Natural killer cell (primary cell): ENCODE measurements at regions of chr13 and their contacts with region 1.

Region 1: DNA sequence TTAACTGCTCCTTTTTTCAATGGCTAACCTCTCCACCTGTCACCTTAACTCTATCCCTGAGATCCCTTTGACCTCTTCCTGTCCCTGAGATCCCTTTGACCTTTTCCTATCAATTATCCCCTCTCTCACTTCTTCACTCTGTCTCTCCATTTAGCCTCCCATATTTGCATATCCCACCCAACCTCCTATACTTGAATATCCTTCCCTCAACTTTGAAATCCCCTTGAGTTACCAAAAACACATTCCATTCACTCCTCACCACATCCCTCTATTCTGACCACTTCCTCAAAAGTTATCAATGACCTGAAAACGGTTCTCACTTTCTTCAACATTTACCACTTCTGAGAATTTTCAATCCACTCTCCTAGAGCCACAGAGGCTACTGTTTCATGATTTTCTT is 3.0 kb downstream of the MYCBP2 start:
- DNase-seq: peak in 1 of 2 donors; percentile 20
- ATAC-seq: no peak
- H3K4me3 ChIP-seq: no peak overlapping the region
- H3K4me3 Mint-ChIP-seq: peak overlapping the region; percentile 96
- H3K27ac ChIP-seq: peak overlapping the region; percentile 5
- H3K27ac Mint-ChIP-seq: peak overlapping the region; percentile 44 to 94
- H3K4me1 ChIP-seq: peaks cover 18% of the 10 kb centered on the region
- H3K4me1 Mint-ChIP-seq: peaks cover 71 to 84% of the 10 kb centered on the region in 2 donors
- H3K27me3 ChIP-seq: no peaks in the 10 kb centered on the region
- H3K27me3 Mint-ChIP-seq: no peaks in the 10 kb centered on the region
- CTCF ChIP-seq: no peak

Region 2: DNA sequence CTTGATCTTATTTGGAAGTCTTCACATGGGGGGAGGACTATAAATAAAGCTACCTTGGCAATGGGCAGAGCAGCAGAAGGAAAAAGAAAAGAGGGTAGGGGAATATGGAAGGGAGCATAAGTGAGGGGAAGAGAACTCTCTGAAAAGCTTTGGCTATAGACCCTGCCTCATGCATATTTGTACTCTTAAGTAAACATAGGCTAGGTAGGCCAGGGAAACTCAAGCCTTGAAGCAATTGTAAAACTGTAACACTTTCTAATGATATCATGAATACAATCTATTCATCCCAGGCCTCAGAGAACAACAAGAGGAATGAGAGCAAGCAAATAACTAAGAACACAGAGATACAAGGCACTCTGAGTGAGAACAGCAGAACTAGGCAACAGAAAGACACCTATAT is 17.4 kb before region 1 on chr13:
- intact Hi-C with region 1: loop called (anchors 2 kb)
- DNase-seq: no peak
- ATAC-seq: no peak
- H3K4me3 ChIP-seq: no peak overlapping the region
- H3K4me3 Mint-ChIP-seq: peak overlapping the region; percentile 29
- H3K27ac ChIP-seq: no peak overlapping the region
- H3K27ac Mint-ChIP-seq: peak overlapping the region; percentile 56 to 57
- H3K4me1 ChIP-seq: peaks cover 5% of the 10 kb centered on the region
- H3K4me1 Mint-ChIP-seq: peaks cover 80 to 85% of the 10 kb centered on the region in 2 donors
- H3K27me3 ChIP-seq: no peaks in the 10 kb centered on the region
- H3K27me3 Mint-ChIP-seq: no peaks in the 10 kb centered on the region
- CTCF ChIP-seq: no peak

Region 3: GRCh38 chr13:77338961-77339401 is 15.1 kb after region 1 on chr13:
- intact Hi-C with region 1: no loop called
- DNase-seq: no peak
- ATAC-seq: peak in 1 of 3 donors; percentile 35
- H3K4me3 ChIP-seq: no peak overlapping the region
- H3K4me3 Mint-ChIP-seq: no peak overlapping the region
- H3K27ac ChIP-seq: peak overlapping the region; percentile 55
- H3K27ac Mint-ChIP-seq: no peak overlapping the region
- H3K4me1 ChIP-seq: peaks cover 9% of the 10 kb centered on the region
- H3K4me1 Mint-ChIP-seq: no peaks in the 10 kb centered on the region
- H3K27me3 ChIP-seq: no peaks in the 10 kb centered on the region
- H3K27me3 Mint-ChIP-seq: peaks cover 4 to 6% of the 10 kb centered on the region in 2 donors
- CTCF ChIP-seq: no peak

Region 4: DNA sequence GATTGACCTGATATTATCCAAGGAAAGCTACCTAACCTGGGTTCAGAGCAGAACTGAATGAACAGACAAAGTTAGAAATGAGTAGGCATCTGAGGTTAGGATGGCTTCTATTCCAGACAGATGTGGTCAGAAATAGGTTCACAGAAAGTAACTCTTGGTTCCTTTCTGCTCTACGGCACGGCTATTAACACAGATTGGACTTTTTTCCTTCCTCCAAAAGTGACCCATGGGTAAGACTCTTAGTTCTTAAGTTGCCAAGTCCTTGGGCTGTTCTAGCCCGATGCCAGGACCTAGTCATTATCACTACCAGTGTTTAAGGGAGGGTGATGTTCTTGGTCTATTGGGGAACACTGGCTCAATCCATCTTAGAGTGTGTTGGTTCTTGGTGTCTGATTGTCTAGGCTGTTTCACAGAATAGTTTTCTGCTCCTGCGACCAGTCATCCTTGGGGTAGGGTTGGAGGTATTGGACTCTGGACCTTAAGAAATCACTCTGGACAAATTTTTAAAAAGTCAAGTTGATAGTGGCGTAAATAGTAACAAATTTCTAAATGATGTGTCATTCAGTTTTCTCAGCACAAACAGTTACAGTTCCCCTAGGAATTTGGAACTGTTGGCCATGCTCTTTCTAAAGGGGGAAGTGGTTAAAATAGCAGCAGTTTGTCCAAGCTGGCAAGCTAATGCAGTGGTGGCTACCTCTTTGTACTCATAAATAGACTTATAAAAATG is 63.2 kb after region 1 on chr13:
- intact Hi-C with region 1: no loop called
- DNase-seq: no peak
- ATAC-seq: no peak
- H3K4me3 ChIP-seq: no peak overlapping the region
- H3K4me3 Mint-ChIP-seq: no peak overlapping the region
- H3K27ac ChIP-seq: no peak overlapping the region
- H3K27ac Mint-ChIP-seq: no peak overlapping the region
- H3K4me1 ChIP-seq: no peaks in the 10 kb centered on the region
- H3K4me1 Mint-ChIP-seq: no peaks in the 10 kb centered on the region
- H3K27me3 ChIP-seq: peaks cover 2% of the 10 kb centered on the region
- H3K27me3 Mint-ChIP-seq: peaks cover 7 to 15% of the 10 kb centered on the region in 2 donors
- CTCF ChIP-seq: no peak